ENCODE measurements at regions of chr7 and their contacts with region 1.

Region 1: DNA sequence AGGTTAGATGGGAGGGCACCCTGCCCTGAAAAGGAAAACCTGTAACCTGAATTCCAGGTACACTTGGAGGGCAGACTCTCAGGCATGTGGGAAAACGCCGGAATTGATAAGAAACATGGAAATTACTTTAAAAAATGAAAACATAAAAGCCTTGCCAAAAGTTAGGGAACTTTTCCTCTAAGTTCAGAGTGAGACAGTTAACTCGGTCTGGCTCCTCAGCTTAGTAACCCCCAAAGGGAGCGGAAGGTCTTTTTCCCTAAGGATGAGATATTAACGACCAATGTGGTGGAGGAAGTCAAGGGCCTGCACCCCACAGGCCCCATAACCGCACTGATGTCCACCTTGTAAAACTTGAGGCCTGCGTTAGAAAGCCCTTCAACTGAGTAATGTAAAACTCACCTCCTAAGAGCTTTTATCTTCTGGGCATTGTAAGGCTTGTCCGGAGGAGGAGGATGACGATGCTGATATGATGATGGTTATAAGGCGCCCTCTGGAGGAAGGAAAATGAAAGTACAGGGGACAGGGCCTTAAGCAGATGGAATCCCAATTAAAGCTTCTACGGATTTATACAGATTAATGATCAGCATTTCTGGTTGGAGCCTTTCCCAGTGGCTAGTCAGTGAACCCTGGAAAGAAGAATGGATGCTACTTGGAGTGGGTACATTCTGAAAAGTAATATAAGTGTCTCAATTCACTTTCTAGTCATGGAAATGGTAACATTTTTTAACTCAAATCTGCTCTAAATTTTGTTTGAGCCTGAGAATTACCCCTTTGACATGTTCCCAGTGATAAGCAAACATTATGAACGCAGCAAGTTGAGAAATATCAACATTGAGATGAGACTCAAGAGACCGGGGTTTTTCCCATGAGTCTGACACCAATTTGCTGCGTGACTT is 694 bp downstream of the COL1A2 start:
- DNase-seq: peak; percentile 80
- ATAC-seq: peak; percentile 83
- H3K4me3 ChIP-seq: no peak overlapping the region
- H3K27ac ChIP-seq: no peak overlapping the region
- H3K4me1 ChIP-seq: peaks cover 2% of the 10 kb centered on the region; the same call in 1 of the 2 replicates
- H3K27me3 ChIP-seq: no peaks in the 10 kb centered on the region
- CTCF ChIP-seq: peak; percentile 89

Region 2: DNA sequence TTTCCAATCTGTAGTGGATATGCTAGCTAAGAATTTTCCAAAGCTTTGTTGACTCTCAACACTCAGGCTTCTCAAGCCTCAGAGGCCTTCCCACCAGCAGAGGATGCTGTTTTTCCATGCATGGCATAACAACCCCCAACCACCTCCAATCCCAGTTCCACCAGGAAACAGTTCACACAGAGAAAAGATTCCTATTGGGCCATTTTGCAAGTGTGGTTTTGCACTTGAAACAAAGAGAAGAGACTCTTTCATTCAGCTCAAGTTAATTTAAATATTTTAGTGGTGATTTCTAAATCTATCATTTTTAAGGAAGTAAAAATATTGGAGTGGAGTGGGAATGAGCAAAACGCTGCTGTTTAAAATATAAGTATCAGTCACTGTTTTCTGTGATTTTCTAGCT is 106.3 kb before region 1 on chr7:
- CTCF ChIA-PET with region 1: interaction called, 32 read pairs
- POLR2A ChIA-PET with region 1: no interaction called
- intact Hi-C with region 1: loop called (anchors 1 kb)
- DNase-seq: peak; percentile 85
- ATAC-seq: peak; percentile 100
- H3K4me3 ChIP-seq: no peak overlapping the region
- H3K27ac ChIP-seq: no peak overlapping the region
- H3K4me1 ChIP-seq: no peaks in the 10 kb centered on the region
- H3K27me3 ChIP-seq: peaks cover 13% of the 10 kb centered on the region
- CTCF ChIP-seq: peak; percentile 96

Region 3: DNA sequence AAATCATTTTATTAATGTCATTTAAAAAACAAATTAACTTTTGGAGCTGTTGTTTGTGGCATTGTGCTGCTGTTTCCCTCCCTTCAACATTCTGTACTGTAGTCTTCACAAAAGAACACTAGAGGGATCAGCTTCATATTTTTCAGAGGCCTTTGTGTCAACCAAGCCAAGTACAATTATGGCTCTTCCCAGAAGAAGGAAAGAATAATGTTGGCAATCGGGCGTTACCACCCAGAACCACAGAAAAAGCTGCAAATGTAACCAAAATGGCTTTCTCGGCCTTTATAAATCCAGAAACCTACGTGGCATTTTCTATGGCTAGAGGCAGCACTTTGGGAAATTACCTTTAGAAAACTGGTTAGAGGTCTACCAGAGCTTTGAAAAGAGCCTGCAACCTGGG is 99.5 kb before region 1 on chr7:
- CTCF ChIA-PET with region 1: interaction called, 38 read pairs
- POLR2A ChIA-PET with region 1: no interaction called
- intact Hi-C with region 1: loop called (anchors 1 kb)
- DNase-seq: peak; percentile 63
- ATAC-seq: peak; percentile 66
- H3K4me3 ChIP-seq: no peak overlapping the region
- H3K27ac ChIP-seq: no peak overlapping the region
- H3K4me1 ChIP-seq: peaks cover 33% of the 10 kb centered on the region
- H3K27me3 ChIP-seq: no peaks in the 10 kb centered on the region
- CTCF ChIP-seq: peak; percentile 70

Region 4: DNA sequence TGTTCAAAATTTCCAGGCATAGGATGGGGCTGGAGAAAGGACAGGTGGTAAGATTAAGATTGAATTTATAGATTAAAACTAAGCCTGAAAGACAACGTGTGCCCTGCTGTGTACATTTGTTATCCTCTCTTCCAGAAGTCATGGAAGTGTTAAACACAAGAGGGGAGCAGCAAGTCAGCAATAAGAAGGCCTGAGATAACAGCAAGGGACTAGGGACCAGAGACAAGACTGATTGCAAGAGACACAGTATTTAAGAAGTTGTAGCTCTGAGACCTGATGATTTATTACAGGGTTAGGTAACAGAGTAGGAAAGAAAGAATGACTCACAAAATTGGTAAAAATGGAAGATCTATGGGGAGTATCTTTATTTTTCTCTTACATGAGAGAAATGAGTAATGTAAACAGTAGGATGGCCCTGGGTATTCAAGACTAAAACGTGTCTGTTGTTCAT is 56.4 kb before region 1 on chr7:
- CTCF ChIA-PET with region 1: no interaction called
- POLR2A ChIA-PET with region 1: no interaction called
- intact Hi-C with region 1: no loop called
- DNase-seq: peak; percentile 36
- ATAC-seq: no peak
- H3K4me3 ChIP-seq: no peak overlapping the region
- H3K27ac ChIP-seq: no peak overlapping the region
- H3K4me1 ChIP-seq: 0 out of 2 replicates have a peak, but pooled peaks cover under 1% of the 10 kb centered on the region
- H3K27me3 ChIP-seq: no peaks in the 10 kb centered on the region
- CTCF ChIP-seq: no peak

Region 5: GRCh38 chr7:94436018-94436604 is 40.7 kb after region 1 on chr7:
- CTCF ChIA-PET with region 1: no interaction called
- POLR2A ChIA-PET with region 1: no interaction called
- intact Hi-C with region 1: loop called (anchors 1 kb)
- DNase-seq: peak; percentile 82
- ATAC-seq: peak; percentile 99
- H3K4me3 ChIP-seq: no peak overlapping the region; the same call in 1 of the 2 replicates
- H3K27ac ChIP-seq: no peak overlapping the region
- H3K4me1 ChIP-seq: no peaks in the 10 kb centered on the region
- H3K27me3 ChIP-seq: no peaks in the 10 kb centered on the region
- CTCF ChIP-seq: peak; percentile 89

Region 6: GRCh38 chr7:94567396-94567795 is 172.0 kb after region 1 on chr7:
- CTCF ChIA-PET with region 1: no interaction called
- POLR2A ChIA-PET with region 1: no interaction called
- intact Hi-C with region 1: no loop called
- DNase-seq: no peak
- ATAC-seq: no peak
- H3K4me3 ChIP-seq: no peak overlapping the region
- H3K27ac ChIP-seq: no peak overlapping the region
- H3K4me1 ChIP-seq: no peaks in the 10 kb centered on the region
- H3K27me3 ChIP-seq: no peaks in the 10 kb centered on the region
- CTCF ChIP-seq: no peak